ENCODE measurements at regions of chrX and their contacts with region 1.

Region 1: GRCh38 chrX:109911046-109911445 is 91.9 kb upstream of the TMEM164 start:
- DNase-seq: no peak
- ATAC-seq: no peak

Region 2: DNA sequence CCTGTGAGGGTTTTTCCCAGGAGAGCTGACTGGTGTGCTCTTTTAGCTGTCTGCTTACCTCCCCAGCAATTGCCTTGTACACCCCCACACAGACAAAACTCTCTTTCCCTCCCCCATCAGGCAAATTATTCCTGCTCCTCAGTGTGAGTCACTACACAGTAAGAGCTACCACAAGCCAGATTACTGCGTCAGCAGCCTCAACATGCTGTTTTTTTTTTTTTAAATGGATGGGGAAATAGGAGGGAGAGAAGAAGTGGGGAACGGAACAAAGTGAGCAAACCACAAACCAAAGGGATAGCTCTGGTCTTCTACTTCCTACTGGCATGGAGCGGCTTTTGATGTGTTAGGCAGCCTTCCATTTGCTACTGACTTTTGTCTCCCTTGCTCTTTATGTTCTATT is 70.5 kb before region 1 on chrX:
- intact Hi-C with region 1: no loop called
- DNase-seq: no peak
- ATAC-seq: peak; percentile 96

Region 3: DNA sequence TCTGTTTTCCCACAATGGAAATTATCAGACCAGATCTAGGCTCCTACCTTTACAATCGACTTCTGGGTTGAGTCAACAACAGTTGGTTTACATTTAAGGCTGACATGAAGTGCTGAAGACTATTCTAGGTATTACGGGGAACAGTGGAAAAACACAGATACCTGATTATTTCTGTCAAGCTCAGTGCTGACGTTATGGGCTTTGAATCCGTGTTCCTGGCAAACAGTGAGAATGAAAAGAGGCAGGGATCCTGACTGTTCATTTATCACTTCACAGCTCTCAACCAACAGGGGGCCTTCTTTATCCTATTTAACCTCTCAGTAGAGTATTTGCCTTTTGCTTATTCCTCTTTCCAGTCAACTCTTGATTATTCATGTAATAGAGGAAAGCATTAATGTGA is 135.0 kb after region 1 on chrX:
- intact Hi-C with region 1: no loop called
- DNase-seq: no peak
- ATAC-seq: peak; percentile 69

Region 4: DNA sequence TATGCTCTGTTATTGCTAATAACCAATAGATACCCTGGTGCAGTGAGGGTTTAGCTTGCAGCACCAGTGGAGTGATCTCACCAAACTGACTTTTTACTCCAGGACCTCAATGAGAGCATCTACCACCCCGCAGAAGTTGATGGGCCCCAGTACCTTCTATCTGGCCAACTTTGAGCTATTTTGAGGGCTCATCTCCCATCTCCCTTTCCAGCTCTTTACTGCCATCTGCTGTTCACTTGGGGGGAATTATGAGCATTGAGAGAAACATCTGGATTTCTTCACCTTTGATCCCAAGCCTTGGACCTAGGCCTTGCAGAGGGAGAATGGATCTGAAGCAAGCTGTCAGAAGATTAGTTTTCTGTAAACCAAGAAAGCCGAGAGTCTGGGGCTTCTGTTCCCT is 235.5 kb after region 1 on chrX:
- intact Hi-C with region 1: loop called (anchors 10 kb)
- DNase-seq: no peak
- ATAC-seq: peak; percentile 70

Measured in left ventricle myocardium superior (tissue), 1 donor.